Breast epithelium (tissue), 4 donors: ENCODE measurements at regions of chr2 and their contacts with region 1.

Region 1: GRCh38 chr2:64342195-64343099 is 111.5 kb upstream of the LGALSL start:
- DNase-seq: no peak
- H3K4me3 ChIP-seq: no peak overlapping the region
- H3K27ac ChIP-seq: no peak overlapping the region
- H3K4me1 ChIP-seq: no peaks in the 10 kb centered on the region
- H3K27me3 ChIP-seq: no peaks in the 10 kb centered on the region
- CTCF ChIP-seq: no peak
- POLR2A ChIP-seq: no peak

Region 2: GRCh38 chr2:64439194-64439593 is 96.7 kb after region 1 on chr2:
- intact Hi-C with region 1: no loop called
- DNase-seq: no peak
- H3K4me3 ChIP-seq: no peak overlapping the region
- H3K27ac ChIP-seq: no peak overlapping the region
- H3K4me1 ChIP-seq: no peaks in the 10 kb centered on the region
- H3K27me3 ChIP-seq: no peaks in the 10 kb centered on the region
- CTCF ChIP-seq: no peak
- POLR2A ChIP-seq: no peak

Region 3: GRCh38 chr2:65349863-65350262 is 1007.4 kb after region 1 on chr2:
- intact Hi-C with region 1: loop called (anchors 5 kb)
- DNase-seq: no peak
- H3K4me3 ChIP-seq: peak overlapping the region in 1 of 3 donors; percentile 24
- H3K27ac ChIP-seq: peak overlapping the region; percentile 3 to 72
- H3K4me1 ChIP-seq: peaks cover 4 to 9% of the 10 kb centered on the region in 2 donors
- H3K27me3 ChIP-seq: no peaks in the 10 kb centered on the region
- CTCF ChIP-seq: no peak
- POLR2A ChIP-seq: no peak